Mammary epithelial cell (primary cell): ENCODE measurements at regions of chr3 and their contacts with region 1.

Region 1: DNA sequence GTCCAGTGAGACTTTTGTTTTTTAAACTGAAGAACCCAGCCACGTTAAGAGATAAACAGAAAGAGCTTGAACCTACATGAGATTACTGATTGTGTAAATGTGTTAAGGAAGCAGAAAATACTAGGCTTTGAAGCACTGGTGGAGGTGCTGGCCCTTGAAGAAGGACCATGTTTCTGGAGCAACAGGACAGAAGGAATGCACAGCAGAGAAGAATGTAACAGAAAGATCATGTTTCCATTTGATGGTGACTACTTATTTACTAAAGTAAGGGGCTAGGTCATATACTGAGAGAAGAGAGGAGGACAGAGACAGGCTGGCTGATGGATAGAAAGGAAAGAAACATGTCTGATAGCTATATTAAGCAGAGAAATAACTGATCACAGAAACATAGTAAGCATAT is 88.8 kb downstream of the CLASP2 start:
- DNase-seq: no peak
- H3K4me3 ChIP-seq: no peak overlapping the region
- H3K27ac ChIP-seq: no peak overlapping the region
- H3K4me1 ChIP-seq: no peaks in the 10 kb centered on the region
- H3K27me3 ChIP-seq: no peaks in the 10 kb centered on the region
- CTCF ChIP-seq: no peak

Region 2: GRCh38 chr3:33250712-33251111 is 378.5 kb before region 1 on chr3:
- CTCF ChIA-PET with region 1: no interaction called
- dilution Hi-C with region 1: no loop called
- in situ Hi-C with region 1: no loop called
- intact Hi-C with region 1: no loop called
- DNase-seq: no peak
- H3K4me3 ChIP-seq: no peak overlapping the region
- H3K27ac ChIP-seq: no peak overlapping the region
- H3K4me1 ChIP-seq: no peaks in the 10 kb centered on the region
- H3K27me3 ChIP-seq: no peaks in the 10 kb centered on the region
- CTCF ChIP-seq: no peak

Region 3: GRCh38 chr3:33711100-33711499 is 81.9 kb after region 1 on chr3:
- CTCF ChIA-PET with region 1: no interaction called
- dilution Hi-C with region 1: loop called (anchors 5 kb)
- in situ Hi-C with region 1: loop called in 1 of 2 experiments (anchors 10 kb)
- intact Hi-C with region 1: no loop called
- DNase-seq: no peak
- H3K4me3 ChIP-seq: no peak overlapping the region
- H3K27ac ChIP-seq: no peak overlapping the region
- H3K4me1 ChIP-seq: peaks cover 4% of the 10 kb centered on the region
- H3K27me3 ChIP-seq: no peaks in the 10 kb centered on the region
- CTCF ChIP-seq: no peak